Right ventricle myocardium superior (tissue), 1 donor: ENCODE measurements at regions of chr1 and their contacts with region 1.

Region 1: GRCh38 chr1:72296481-72296880 is 14.1 kb upstream of the NEGR1 start:
- DNase-seq: no peak
- ATAC-seq: no peak

Region 2: GRCh38 chr1:72341661-72342060 is 45.2 kb after region 1 on chr1:
- intact Hi-C with region 1: loop called (anchors 5 kb)
- DNase-seq: no peak
- ATAC-seq: no peak

Region 3: GRCh38 chr1:72355899-72356298 is 59.4 kb after region 1 on chr1:
- intact Hi-C with region 1: no loop called
- DNase-seq: no peak
- ATAC-seq: no peak